Right cardiac atrium (tissue), 5 donors: ENCODE measurements at regions of chr3 and their contacts with region 1.

Region 1: GRCh38 chr3:126389112-126389793 is 5.5 kb upstream of the CFAP100 start:
- DNase-seq: peak; percentile 95 to 97 (median 95)
- ATAC-seq: peak; percentile 97
- H3K4me3 ChIP-seq: no peak overlapping the region
- H3K27ac ChIP-seq: peak overlapping the region; percentile 72
- H3K4me1 ChIP-seq: no peaks in the 10 kb centered on the region
- H3K27me3 ChIP-seq: no peaks in the 10 kb centered on the region

Region 2: GRCh38 chr3:126134219-126134975 is 254.9 kb before region 1 on chr3:
- intact Hi-C with region 1: loop called in 3 of 4 experiments (anchors 5 to 10 kb)
- DNase-seq: peak; percentile 66 to 84 (median 77)
- ATAC-seq: peak; percentile 70 to 82
- H3K4me3 ChIP-seq: no peak overlapping the region
- H3K27ac ChIP-seq: no peak overlapping the region
- H3K4me1 ChIP-seq: no peaks in the 10 kb centered on the region
- H3K27me3 ChIP-seq: no peaks in the 10 kb centered on the region

Region 3: DNA sequence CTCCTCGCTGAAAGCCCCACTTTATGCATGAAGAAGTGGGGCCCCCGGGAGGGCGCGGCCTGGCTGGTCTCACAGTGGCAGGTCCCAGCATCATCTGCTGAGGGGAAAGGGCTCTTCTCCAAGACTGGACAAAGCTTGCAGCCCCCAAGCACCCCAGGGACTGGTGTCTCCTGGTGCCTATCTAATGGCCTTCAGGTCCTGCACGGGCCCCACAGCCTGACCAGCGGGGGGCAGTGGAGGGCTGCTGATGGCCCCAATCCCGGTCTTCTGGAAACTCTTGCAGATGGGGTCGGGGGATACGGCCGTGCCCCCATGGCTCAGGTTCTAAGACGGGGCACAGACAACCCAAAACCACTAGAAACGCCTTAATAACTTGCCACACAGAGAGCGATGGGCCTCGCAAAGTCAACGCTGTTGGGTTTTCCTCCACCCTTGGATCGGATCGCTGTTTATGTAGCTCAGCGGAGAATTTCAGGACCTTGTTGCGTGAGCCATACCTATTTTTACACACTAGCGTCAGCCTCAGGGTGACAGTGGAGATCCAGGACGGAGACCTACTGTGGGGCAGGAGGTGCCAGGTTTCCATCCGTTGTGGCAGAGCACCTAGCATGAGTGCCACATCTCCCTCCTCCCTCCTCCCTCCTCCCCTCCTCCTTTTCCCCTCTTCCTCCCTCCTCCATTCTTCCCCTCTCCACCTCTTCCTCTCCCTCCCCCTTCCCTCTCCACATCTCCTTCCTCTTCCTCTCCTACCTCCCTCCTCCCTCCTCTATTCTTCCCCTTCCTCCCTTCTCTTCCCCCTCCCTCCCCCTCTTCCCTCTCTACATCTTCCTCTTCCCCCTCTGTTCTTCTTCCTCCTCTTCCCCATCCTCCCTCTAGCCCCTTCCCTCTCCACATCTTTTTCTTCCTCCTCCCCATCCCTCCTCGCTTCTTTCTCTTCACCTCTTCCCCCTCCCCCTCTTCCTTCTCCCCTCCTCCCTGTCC is 129.6 kb before region 1 on chr3:
- intact Hi-C with region 1: loop called (anchors 2 to 5 kb)
- DNase-seq: peak; percentile 50 to 90 (median 88)
- ATAC-seq: peak; percentile 77 to 79
- H3K4me3 ChIP-seq: no peak overlapping the region
- H3K27ac ChIP-seq: no peak overlapping the region
- H3K4me1 ChIP-seq: no peaks in the 10 kb centered on the region
- H3K27me3 ChIP-seq: no peaks in the 10 kb centered on the region